ENCODE measurements at regions of chr2 and their contacts with region 1.

Region 1: DNA sequence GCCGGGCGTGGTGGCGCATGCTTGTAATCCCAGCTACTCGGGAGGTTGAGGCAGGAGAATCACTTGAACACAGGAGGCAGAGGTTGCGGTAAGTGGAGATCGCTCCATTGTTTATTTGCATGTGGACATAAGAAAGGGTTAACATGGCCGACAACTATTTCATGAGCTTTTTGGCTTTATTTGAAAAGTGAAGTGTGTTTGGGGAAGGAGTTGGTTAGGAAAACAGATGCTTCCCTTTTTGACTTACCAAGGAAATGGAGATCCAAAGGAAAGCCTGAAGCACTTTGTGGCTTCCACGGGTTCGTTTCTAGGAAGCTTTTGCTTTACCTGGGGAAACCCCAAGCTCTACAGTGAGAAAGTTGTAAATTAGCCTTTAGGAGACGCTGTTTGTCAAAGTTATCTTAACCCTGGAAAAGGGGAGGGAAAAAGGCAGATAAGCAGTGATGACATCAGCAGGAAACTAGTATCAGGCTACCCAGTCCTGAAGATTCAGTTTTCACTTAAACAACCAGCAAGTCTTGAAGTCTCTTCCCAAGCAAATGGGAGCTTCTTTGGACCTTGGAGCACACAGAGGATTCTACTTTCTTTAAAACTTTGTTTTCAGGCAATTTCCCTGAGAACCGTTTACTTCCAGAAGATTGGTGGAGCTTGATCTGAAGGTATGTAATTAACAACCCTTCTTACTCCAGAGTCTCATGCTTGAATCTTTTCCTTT is at the start of gene CASP10:
- DNase-seq: peak; percentile 57
- H3K4me3 ChIP-seq: peak within 1 kb of the TSS; percentile 20
- H3K27ac ChIP-seq: no peak within 1 kb of the TSS
- H3K4me1 ChIP-seq: no peaks in the 10 kb centered on the region
- H3K27me3 ChIP-seq: no peaks in the 10 kb centered on the region
- CTCF ChIP-seq: peak; percentile 37; the same call in 1 of the 2 replicates
- total RNA-seq, gene CASP10: 0.85 and 1.2 TPM in 2 replicates

Region 2: DNA sequence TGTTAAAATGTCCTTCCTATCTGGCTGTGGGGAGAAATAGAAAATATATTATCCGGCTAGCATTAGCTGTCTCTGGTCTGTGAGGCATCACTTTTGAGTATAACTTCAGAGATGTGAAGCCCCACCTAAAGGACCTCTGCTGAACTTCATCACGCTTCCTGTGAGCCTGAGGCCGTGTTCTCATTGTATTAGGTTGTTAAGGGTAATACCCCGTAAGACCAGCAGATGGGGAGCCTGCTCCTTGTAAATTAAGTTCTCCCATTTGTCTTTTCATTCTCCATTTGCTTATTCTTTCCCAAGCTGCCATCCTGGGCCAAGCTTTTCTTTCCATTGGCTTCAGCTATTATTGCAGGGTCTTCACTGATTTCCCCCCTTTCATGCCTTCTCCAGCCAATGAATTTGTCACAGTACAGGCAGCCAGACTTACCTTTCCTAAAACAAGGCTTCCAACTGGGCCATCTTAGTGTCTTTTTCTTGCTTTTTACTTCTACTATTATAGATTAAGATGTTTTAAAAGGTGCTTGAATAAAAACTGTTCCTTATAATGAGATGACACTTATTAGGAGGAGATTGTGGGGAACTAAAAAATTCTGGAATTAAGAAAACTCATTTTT is 281.2 kb before region 1 on chr2:
- CTCF ChIA-PET with region 1: interaction called, 10 read pairs
- POLR2A ChIA-PET with region 1: no interaction called
- intact Hi-C with region 1: no loop called
- DNase-seq: peak; percentile 92
- H3K4me3 ChIP-seq: no peak overlapping the region
- H3K27ac ChIP-seq: no peak overlapping the region
- H3K4me1 ChIP-seq: no peaks in the 10 kb centered on the region
- H3K27me3 ChIP-seq: no peaks in the 10 kb centered on the region
- CTCF ChIP-seq: peak; percentile 72

Region 3: DNA sequence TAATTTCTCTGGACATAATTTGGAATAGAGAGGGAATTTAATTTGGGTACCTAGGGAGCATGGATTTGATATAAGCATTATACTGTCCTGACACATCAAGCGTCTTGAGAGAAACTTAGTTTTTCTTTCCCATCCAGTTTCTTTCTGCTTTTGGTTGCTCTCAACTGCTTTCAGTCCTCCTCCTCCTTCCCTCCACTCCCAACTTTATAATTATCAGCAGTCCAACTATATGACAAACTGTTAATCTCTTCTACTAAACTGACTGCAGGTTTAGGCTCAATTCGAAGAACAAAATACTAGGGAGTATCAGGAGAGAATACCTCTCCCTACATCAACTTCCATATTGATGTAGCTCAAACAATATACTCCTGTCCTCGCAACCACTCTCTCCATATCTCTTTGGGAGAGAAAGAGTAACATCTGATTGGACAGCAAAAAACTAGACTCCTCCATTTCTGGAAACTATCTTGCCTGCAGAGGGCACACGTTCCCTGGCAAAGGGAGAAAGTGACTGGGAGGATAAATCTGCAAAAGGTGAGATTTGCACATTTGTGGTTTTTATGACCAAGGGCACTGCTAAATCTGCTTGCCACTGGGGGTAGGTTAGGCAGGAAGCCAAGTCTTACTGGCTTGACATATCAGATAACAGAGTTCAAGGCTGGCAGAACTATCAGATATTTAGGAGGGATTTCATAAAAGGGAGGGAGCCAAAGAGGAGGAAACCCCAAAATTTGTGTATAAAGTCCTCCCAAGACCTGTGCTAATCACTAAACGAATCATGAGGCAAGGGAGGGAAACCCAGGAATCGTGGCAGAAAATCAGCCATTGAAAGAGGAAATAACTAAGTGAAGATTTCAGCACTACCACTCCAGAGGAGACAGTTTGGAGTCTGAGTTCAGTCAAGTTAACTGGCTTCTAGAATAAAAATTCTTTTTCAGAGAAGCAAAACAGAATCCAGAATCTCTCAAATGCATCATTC is 1648.7 kb after region 1 on chr2:
- CTCF ChIA-PET with region 1: no interaction called
- POLR2A ChIA-PET with region 1: no interaction called
- intact Hi-C with region 1: no loop called
- DNase-seq: peak; percentile 84
- H3K4me3 ChIP-seq: no peak overlapping the region
- H3K27ac ChIP-seq: no peak overlapping the region
- H3K4me1 ChIP-seq: no peaks in the 10 kb centered on the region
- H3K27me3 ChIP-seq: no peaks in the 10 kb centered on the region
- CTCF ChIP-seq: peak; percentile 81

Measured in A673 (cell line).